ENCODE measurements at regions of chr7 and their contacts with region 1.

Region 1: GRCh38 chr7:39566023-39566921 is at the start of gene YAE1:
- DNase-seq: peak; percentile 73
- H3K4me3 Mint-ChIP-seq: peak within 1 kb of the TSS; percentile 99
- H3K27ac Mint-ChIP-seq: peak within 1 kb of the TSS; percentile 91
- H3K4me1 Mint-ChIP-seq: peaks cover 21% of the 10 kb centered on the region
- H3K27me3 Mint-ChIP-seq: peaks cover 9% of the 10 kb centered on the region
- total RNA-seq, gene YAE1: 10.4 and 12.1 TPM in 2 replicates

Region 2: GRCh38 chr7:38908759-38909335 is 657.4 kb before region 1 on chr7 and contains the start of gene VPS41:
- intact Hi-C with region 1: loop called (anchors 1 kb)
- DNase-seq: peak; percentile 72
- H3K4me3 Mint-ChIP-seq: peak within 1 kb of the TSS; percentile 97
- H3K27ac Mint-ChIP-seq: peak within 1 kb of the TSS; percentile 93
- H3K4me1 Mint-ChIP-seq: peaks cover 38% of the 10 kb centered on the region
- H3K27me3 Mint-ChIP-seq: peaks cover 2% of the 10 kb centered on the region
- total RNA-seq, gene VPS41: 52.9 and 56.3 TPM in 2 replicates

Region 3: DNA sequence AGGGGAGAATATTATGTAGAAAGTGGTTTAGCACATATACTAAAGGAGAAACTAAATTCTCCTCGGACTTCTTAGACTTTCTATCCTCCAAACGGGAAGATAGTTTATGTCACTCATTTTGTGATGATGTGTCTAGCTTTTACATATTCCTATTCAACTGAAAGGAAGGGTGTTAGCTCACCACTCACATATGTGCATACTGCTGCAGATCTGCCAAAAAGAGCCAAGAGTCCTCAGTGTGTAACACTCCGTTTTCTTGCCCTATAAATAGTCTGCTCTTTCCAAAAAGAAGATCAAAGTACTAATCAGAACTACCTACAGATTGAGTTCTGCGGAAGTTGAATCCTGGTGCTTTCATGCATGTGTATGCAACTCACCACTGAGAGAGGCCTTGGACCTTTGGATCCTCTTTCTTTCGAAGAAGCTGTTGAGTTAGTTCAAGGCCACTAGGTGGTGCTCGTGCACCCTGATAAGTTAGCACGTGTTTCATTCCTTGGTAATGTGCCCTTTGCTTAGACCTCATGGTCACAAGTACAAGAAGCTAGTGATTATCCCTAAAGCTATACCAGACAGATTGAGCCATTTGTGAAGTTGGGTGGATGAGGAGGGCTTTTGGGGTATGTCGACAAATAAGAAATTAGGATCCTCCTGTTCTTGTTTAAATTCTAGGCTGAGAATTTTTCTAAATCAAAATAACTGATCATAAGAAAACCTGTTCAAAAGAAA is 14.0 kb after region 1 on chr7:
- intact Hi-C with region 1: loop called (anchors 1 kb)
- DNase-seq: peak; percentile 63
- H3K4me3 Mint-ChIP-seq: no peak overlapping the region
- H3K27ac Mint-ChIP-seq: peak overlapping the region; percentile 64
- H3K4me1 Mint-ChIP-seq: peaks cover 10% of the 10 kb centered on the region
- H3K27me3 Mint-ChIP-seq: no peaks in the 10 kb centered on the region

Region 4: GRCh38 chr7:39589323-39590111 is 23.2 kb after region 1 on chr7:
- intact Hi-C with region 1: loop called (anchors 1 kb)
- DNase-seq: peak; percentile 77
- H3K4me3 Mint-ChIP-seq: peak overlapping the region; percentile 63
- H3K27ac Mint-ChIP-seq: peak overlapping the region; percentile 80
- H3K4me1 Mint-ChIP-seq: peaks cover 69% of the 10 kb centered on the region
- H3K27me3 Mint-ChIP-seq: no peaks in the 10 kb centered on the region

Region 5: GRCh38 chr7:39732837-39733804 is 166.8 kb after region 1 on chr7:
- intact Hi-C with region 1: loop called (anchors 1 kb)
- DNase-seq: peak; percentile 97
- H3K4me3 Mint-ChIP-seq: peak overlapping the region; percentile 86
- H3K27ac Mint-ChIP-seq: peak overlapping the region; percentile 95
- H3K4me1 Mint-ChIP-seq: peaks cover 46% of the 10 kb centered on the region
- H3K27me3 Mint-ChIP-seq: peaks cover 6% of the 10 kb centered on the region

Region 6: DNA sequence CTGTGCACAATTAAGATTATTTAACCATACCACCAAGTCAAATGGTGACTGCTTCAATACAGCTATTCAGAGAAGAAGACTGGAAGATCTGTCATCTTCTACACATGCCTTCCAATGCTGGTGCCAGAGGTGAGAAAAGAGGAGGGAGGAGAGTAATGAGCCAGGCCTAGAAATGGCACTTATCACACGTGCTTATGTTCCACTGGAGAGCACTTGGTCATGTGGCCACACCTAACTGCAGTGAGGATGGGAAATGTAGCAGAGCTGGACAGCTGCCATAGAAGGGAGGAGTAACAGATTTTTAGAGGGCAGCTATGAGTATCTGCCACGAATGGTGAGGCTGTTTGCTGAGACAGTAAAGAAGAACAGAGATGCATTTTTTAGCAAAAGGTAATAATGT is 491.0 kb after region 1 on chr7:
- intact Hi-C with region 1: loop called (anchors 5 kb)
- DNase-seq: no peak
- H3K4me3 Mint-ChIP-seq: no peak overlapping the region
- H3K27ac Mint-ChIP-seq: no peak overlapping the region
- H3K4me1 Mint-ChIP-seq: peaks cover 4% of the 10 kb centered on the region
- H3K27me3 Mint-ChIP-seq: no peaks in the 10 kb centered on the region

Measured in activated T-helper 1 cell treated with anti-CD3 and anti-CD28 coated beads, Interleukin-12 subunit alpha, Interleukin-12 subunit beta, Interleukin-2, Interleukin-4 antibody, amounts not matched to agents 30 ng/mL and 10 ng/mL and 1 ng/mL, durations not matched to agents 14 hours and 24 hours and 36 hours (primary cell).